CD4-positive, alpha-beta memory T cell (primary cell): ENCODE measurements at regions of chrX and their contacts with region 1.

Region 1: GRCh38 chrX:48715072-48715471 is 18.5 kb downstream of the SUV39H1 start:
- DNase-seq: no peak
- H3K4me3 ChIP-seq: no peak overlapping the region
- H3K4me3 Mint-ChIP-seq: peak overlapping the region; percentile 2 to 75 (median 47)
- H3K27ac ChIP-seq: peak overlapping the region; percentile 47
- H3K27ac Mint-ChIP-seq: peak overlapping the region; percentile 83 to 97 (median 95)
- H3K4me1 ChIP-seq: peaks cover 90% of the 10 kb centered on the region
- H3K4me1 Mint-ChIP-seq: peaks cover 76 to 85% (median 80%) of the 10 kb centered on the region in 4 donors
- H3K27me3 ChIP-seq: no peaks in the 10 kb centered on the region
- H3K27me3 Mint-ChIP-seq: no peaks in the 10 kb centered on the region

Region 2: GRCh38 chrX:48683411-48683982 is 31.6 kb before region 1 on chrX and contains the start of gene WAS:
- CTCF ChIA-PET with region 1: interaction called, 5 read pairs
- POLR2A ChIA-PET with region 1: interaction called, 22 read pairs
- intact Hi-C with region 1: no loop called
- DNase-seq: peak; percentile 54 to 63 (median 58)
- H3K4me3 ChIP-seq: peak within 1 kb of the TSS; percentile 79 to 93
- H3K4me3 Mint-ChIP-seq: peak within 1 kb of the TSS; percentile 86 to 95 (median 93)
- H3K27ac ChIP-seq: peak within 1 kb of the TSS; percentile 69
- H3K27ac Mint-ChIP-seq: peak within 1 kb of the TSS; percentile 88 to 95 (median 93)
- H3K4me1 ChIP-seq: peaks cover 48% of the 10 kb centered on the region
- H3K4me1 Mint-ChIP-seq: peaks cover 32 to 66% (median 44%) of the 10 kb centered on the region in 4 donors
- H3K27me3 ChIP-seq: no peaks in the 10 kb centered on the region
- H3K27me3 Mint-ChIP-seq: no peaks in the 10 kb centered on the region
- total RNA-seq, gene WAS: 108 to 110 TPM